Sigmoid colon (tissue), 7 donors: ENCODE measurements at regions of chr1 and their contacts with region 1.

Region 1: DNA sequence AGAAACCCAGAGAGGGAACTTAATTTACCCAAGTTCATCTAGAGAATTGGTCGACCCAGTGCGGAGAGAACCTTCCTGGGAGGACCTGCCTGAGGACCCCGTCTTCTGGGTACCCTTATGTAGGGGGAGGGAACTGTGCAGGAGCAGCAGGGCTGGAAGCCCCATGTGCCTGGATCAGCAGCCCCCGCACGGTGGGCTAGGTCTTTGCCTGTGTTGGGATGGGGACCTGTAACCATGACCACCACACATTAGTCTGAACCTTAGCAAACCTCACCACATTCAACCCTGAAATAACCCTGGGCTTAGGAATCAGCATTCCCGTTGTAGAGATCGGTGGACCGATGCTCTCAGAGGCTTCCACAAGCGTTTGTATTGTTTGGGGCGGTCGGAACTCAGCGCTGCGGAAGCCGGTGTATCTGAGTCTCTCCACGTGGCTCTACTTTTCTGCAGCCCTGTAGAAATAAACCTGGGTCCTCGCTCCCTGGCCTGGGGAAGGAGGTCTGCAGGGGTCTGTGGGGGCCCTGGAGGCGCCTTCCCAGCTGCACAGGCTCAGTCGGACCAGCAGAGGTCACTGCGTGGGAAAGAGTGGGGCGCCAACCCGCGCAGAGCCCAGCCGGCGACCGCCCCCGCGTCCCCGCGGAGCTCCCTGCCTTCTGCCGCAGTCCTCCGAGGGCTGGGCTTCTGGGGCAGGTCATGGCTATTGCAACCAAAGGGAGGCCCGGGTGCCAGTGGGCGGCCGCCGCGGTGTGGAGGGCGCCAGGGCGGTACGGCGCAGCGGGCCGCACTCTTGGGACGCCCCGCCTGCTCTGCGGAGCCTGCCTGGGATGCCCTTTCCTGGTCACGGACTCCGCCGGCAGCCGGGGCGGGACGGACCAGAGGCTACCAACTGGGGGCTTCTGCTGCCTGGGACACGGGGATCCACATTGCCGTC is 36.2 kb upstream of the KCNA10 start:
- DNase-seq: no peak
- H3K4me3 ChIP-seq: peak overlapping the region; percentile 21 to 52 (median 41)
- H3K27ac ChIP-seq: peak overlapping the region; percentile 38 to 60 (median 52)
- H3K4me1 ChIP-seq: peaks cover 0 to 15% (median 14%) of the 10 kb centered on the region in 4 donors
- H3K27me3 ChIP-seq: peaks cover 0 to 45% (median 16%) of the 10 kb centered on the region in 3 donors
- CTCF ChIP-seq: peak; percentile 30 to 79 (median 57)
- EP300 ChIP-seq: no peak
- POLR2A ChIP-seq: no peak

Region 2: GRCh38 chr1:110390692-110391245 is 164.4 kb before region 1 on chr1 and contains the start of gene SLC16A4:
- intact Hi-C with region 1: no loop called
- DNase-seq: no peak
- H3K4me3 ChIP-seq: peak within 1 kb of the TSS; percentile 17 to 37 (median 30)
- H3K27ac ChIP-seq: peak within 1 kb of the TSS; percentile 65 to 75 (median 66)
- H3K4me1 ChIP-seq: peaks cover 0 to 4% (median 2%) of the 10 kb centered on the region in 4 donors
- H3K27me3 ChIP-seq: no peaks in the 10 kb centered on the region
- CTCF ChIP-seq: no peak
- EP300 ChIP-seq: no peak
- POLR2A ChIP-seq: no peak
- total RNA-seq, gene SLC16A4: 3.7 to 10.2 (median 7.5) TPM

Region 3: DNA sequence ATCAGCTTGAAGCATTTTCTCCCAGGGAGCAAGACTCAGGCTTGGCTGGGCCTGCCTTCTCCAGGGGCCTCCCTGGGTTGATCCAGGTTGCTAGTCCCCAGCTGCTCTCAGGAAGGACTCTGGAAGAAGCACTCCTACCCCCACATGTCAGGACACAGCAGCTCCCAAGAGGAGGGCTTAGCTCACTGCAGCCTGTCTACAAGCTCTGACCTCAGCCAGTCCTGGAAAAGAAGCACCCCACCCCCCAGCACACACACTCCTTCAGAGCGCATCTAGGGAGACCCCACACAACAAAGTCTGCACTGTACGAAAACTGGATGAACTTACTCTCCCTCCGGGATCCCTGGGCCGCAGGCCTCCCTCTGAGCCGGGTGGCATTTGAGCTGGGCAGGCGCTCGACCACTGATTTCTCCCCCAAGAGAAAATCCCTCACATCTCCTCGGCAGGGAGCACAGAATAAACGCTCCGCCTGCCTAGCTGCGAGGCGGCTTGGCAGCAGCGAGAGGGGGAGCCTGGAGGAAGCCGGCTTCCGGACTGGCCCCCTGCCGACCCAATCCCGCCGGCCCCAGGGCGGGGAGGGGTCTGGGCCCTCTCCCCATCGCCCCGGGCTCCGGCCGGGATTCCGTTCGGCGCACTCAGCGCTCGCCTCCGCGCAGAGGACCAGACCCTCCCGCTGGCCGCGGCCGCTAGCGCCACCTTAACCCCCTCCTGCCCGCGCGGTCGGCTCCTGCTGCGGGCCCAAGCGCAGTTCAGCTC is 50.9 kb after region 1 on chr1 and contains the start of gene KCNA2:
- intact Hi-C with region 1: loop called (anchors 2 kb)
- DNase-seq: peak; percentile 74
- H3K4me3 ChIP-seq: peak within 1 kb of the TSS; percentile 46 to 71 (median 56)
- H3K27ac ChIP-seq: peak within 1 kb of the TSS; percentile 60 to 71 (median 70)
- H3K4me1 ChIP-seq: peaks cover 0 to 26% (median 25%) of the 10 kb centered on the region in 4 donors
- H3K27me3 ChIP-seq: peaks cover 21 to 49% (median 38%) of the 10 kb centered on the region in 3 donors
- CTCF ChIP-seq: no peak
- EP300 ChIP-seq: no peak
- POLR2A ChIP-seq: no peak
- total RNA-seq, gene KCNA2: 0.82 to 5.8 (median 2.2) TPM